HEK293 (cell line): ENCODE measurements at regions of chrX and their contacts with region 1.

Region 1: DNA sequence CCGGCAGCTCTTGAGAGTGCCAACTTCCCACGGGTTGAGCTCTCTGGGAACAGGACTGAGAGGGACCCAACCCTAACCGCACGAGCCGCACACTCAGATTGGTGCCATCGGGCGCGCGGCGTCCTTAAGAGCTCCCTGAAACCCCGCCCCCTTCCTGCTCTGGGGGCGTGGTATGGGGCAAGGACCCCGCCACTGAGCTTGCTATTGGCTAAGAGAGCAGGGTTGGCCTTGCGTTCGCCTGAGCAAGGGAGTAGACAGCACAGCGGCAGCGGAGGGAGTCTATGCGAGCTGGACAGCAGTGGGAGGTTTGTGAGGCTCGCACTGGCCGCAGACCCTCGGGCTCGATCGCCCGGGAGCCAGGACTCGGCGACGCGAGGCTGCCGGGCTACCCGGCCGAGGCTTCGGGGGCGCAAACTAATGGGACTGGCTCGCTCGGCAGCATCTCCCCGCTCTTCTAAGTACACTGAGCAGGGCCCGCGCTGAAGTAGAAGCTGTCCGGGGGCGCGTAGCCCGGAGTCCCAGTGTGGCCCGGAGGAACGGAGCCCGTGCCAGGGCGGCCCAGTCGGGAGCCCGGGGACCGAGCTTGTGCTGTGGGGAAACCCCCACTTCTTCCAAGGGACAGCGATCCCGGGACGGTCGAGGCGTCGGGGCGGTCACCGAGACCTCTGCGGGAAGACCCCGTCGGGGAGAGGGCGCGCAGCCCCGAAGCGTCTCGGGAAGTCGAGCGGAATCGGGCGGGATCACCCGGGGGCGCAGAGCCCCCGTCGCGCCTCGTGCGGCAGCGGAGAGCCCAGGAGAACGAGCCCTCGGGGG is at the start of gene EFNB1:
- H3K4me3 ChIP-seq: peak within 1 kb of the TSS; percentile 58
- H3K27ac ChIP-seq: peak within 1 kb of the TSS; percentile 48; the same call in 1 of the 2 replicates
- H3K4me1 ChIP-seq: no peaks in the 10 kb centered on the region; the same call in 1 of the 2 replicates
- CTCF ChIP-seq: no peak

Region 2: GRCh38 chrX:68789976-68790375 is 39.0 kb before region 1 on chrX:
- CTCF ChIA-PET with region 1: no interaction called
- POLR2A ChIA-PET with region 1: no interaction called
- H3K4me3 ChIP-seq: no peak overlapping the region
- H3K27ac ChIP-seq: no peak overlapping the region
- H3K4me1 ChIP-seq: no peaks in the 10 kb centered on the region
- CTCF ChIP-seq: no peak

Region 3: DNA sequence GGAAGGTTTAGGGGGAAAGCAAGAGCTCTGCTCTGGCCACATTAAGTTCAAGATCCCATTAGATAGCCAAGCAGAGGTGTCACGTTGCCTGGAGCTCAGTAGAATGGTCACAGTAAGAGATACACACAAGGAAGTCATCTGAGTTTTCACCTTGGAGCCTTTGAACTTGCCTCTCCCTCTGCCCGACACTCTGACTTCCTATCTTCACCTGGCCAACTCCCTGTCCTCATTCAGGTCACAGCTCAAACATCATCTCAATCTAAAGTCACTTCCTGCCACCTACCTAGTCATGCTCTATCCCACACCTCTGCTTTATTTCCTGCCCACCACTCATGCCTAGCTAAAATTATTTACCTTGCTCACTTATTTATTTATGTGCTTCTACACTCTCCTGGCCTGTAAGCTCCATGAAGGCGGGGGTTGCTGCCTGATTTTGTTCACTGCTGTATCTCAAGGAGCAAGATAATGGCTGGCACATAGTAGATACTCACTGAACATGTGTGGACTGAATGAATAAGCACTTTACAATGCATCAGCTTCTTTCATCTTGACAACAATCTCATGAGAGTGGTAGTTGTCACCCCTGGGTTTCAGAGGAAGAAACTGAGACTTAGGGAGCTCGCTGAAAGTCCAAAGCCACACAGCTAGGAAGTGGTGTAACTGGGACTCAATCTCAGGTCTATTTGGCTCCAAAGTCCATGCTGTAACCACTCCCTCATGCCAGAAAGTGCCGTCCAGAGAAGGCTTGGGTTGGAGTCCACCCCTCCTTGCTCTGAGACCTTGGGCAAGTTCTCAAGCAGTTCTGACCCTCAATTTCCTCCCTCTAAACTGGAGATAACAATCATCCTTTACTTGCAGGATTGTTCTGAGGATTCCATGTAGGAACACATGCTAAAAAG is 40.2 kb after region 1 on chrX:
- CTCF ChIA-PET with region 1: interaction called, 3 read pairs
- POLR2A ChIA-PET with region 1: interaction called, 14 read pairs
- H3K4me3 ChIP-seq: no peak overlapping the region
- H3K27ac ChIP-seq: no peak overlapping the region
- H3K4me1 ChIP-seq: no peaks in the 10 kb centered on the region
- CTCF ChIP-seq: no peak

Region 4: GRCh38 chrX:69031221-69031620 is 202.3 kb after region 1 on chrX:
- CTCF ChIA-PET with region 1: interaction called, 14 read pairs
- POLR2A ChIA-PET with region 1: no interaction called
- H3K4me3 ChIP-seq: no peak overlapping the region
- H3K27ac ChIP-seq: no peak overlapping the region
- H3K4me1 ChIP-seq: no peaks in the 10 kb centered on the region
- CTCF ChIP-seq: peak; percentile 48; the same call in 1 of the 2 replicates

Region 5: DNA sequence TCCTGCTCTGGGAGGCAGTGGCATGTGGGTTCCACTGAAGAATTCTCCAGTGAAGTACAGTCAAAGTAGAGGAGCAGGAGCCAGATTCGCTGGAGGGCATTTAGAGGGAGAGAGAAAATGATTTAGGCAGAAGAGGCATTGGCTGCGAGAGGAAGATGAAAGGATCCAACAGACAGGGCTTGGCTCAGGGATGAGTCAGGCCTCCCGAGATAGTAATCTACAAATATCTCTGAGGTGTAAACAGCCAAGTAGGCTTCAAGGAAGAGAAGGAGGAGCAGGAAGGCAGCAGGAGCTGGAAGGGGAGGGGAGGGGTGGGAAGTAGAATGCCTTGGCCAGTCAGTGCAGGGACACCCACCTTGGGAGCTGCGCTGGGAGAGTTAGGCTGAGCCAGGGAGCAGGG is 280.7 kb after region 1 on chrX:
- CTCF ChIA-PET with region 1: interaction called, 4 read pairs
- POLR2A ChIA-PET with region 1: interaction called, 11 read pairs
- H3K4me3 ChIP-seq: no peak overlapping the region
- H3K27ac ChIP-seq: no peak overlapping the region
- H3K4me1 ChIP-seq: peaks cover 6% of the 10 kb centered on the region; the same call in 1 of the 2 replicates
- CTCF ChIP-seq: no peak

Region 6: DNA sequence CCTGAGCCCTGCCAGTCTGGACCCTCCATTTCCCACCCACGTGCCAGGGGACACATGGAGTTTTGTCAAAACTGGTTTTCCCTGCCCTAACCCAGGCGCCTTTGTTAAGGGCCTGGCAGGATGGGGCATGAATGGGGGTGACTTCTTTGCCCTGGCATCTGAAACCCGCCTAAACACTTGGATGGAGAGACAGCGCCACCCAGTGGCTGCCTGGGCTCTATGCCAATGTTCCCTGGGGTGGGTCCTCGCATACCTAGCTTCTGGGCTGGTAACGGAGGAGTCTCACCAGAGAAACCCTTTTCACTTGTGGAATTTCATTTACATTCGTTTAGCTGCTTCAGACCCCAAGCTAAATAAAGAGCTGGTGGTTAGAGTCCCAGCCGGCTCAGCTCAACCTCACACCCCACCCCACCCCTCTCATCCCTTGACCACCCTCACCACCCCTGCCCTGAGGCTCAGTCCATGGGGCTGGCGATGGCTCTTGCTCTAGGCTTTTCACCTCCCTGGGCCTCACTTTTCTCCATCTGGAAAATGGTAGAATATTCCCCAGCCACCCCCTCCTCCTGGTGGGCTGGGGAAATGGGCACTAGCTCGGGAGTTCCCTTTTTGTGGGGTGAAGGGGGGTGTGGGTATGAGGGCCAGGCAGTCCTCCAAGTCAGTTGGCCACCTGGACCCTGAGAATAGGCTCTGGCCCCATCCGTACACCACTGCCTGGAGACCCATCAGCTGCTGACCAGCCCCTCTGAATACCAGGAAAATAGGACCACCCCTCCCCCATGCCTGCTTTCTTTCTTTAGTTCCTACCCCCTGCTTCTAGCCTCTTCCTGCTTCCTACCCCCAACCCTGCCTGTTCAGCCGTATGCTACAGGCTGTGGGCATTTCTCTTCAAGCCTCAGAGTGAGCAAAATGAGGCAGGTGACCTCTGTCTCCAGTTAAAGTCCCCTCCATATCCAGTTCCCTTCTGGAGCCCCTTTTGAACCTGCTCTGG is 393.5 kb after region 1 on chrX:
- CTCF ChIA-PET with region 1: interaction called, 137 read pairs
- POLR2A ChIA-PET with region 1: interaction called, 34 read pairs
- H3K4me3 ChIP-seq: no peak overlapping the region
- H3K27ac ChIP-seq: no peak overlapping the region
- H3K4me1 ChIP-seq: no peaks in the 10 kb centered on the region
- CTCF ChIP-seq: peak; percentile 73

Region 7: DNA sequence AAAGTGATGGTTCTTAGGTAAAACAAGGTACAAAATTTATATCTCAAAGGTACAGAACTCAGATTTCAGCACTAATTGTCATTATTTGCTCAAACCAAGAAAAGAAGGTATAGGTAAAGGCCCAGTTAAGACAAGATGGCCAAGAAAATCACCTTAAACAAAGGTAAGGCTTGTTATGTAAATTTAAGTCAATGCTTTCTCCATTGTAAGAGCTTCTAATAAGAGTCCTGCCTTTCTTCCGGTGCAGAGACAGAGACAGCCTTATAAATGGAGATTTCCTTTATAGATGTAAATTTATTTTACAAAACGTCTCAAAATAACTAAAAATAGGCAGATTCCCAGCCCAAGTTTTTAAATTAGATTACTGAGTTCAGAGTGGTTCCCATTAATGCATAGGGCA is 876.9 kb after region 1 on chrX:
- CTCF ChIA-PET with region 1: no interaction called
- POLR2A ChIA-PET with region 1: no interaction called
- H3K4me3 ChIP-seq: no peak overlapping the region
- H3K27ac ChIP-seq: no peak overlapping the region
- H3K4me1 ChIP-seq: no peaks in the 10 kb centered on the region
- CTCF ChIP-seq: no peak